Naive thymus-derived CD4-positive, alpha-beta T cell (primary cell): ENCODE measurements at regions of chr4 and their contacts with region 1.

Region 1: DNA sequence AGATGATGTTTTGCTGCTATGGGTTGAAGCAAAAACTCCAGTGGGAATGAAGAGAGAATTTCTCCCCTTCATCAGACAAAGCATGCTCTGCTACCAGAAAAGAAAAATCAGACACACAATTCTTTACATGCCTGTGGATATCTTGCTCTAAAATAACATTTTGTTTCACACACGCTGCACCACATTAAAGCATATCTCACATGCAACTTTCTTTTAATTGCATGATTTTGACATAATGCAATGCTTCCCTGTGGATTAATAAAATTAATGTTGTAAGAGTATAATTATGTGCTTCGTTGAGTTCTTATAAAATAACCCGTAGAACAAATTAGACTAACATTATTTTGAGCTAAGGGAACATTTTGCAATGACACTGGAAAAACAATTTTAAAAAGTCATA is 2230.7 kb downstream of the PCDH7 start:
- DNase-seq: no peak
- ATAC-seq: no peak
- H3K4me3 ChIP-seq: no peak overlapping the region
- H3K4me3 Mint-ChIP-seq: no peak overlapping the region
- H3K27ac ChIP-seq: no peak overlapping the region
- H3K27ac Mint-ChIP-seq: no peak overlapping the region
- H3K4me1 ChIP-seq: no peaks in the 10 kb centered on the region
- H3K4me1 Mint-ChIP-seq: no peaks in the 10 kb centered on the region
- H3K27me3 ChIP-seq: no peaks in the 10 kb centered on the region
- H3K27me3 Mint-ChIP-seq: no peaks in the 10 kb centered on the region

Region 2: GRCh38 chr4:32417113-32417704 is 533.7 kb before region 1 on chr4:
- CTCF ChIA-PET with region 1: no interaction called
- POLR2A ChIA-PET with region 1: no interaction called
- intact Hi-C with region 1: no loop called
- DNase-seq: no peak
- ATAC-seq: no peak
- H3K4me3 ChIP-seq: no peak overlapping the region
- H3K4me3 Mint-ChIP-seq: no peak overlapping the region
- H3K27ac ChIP-seq: no peak overlapping the region
- H3K27ac Mint-ChIP-seq: no peak overlapping the region
- H3K4me1 ChIP-seq: no peaks in the 10 kb centered on the region
- H3K4me1 Mint-ChIP-seq: no peaks in the 10 kb centered on the region
- H3K27me3 ChIP-seq: no peaks in the 10 kb centered on the region
- H3K27me3 Mint-ChIP-seq: no peaks in the 10 kb centered on the region

Region 3: GRCh38 chr4:32890398-32890797 is 60.5 kb before region 1 on chr4:
- CTCF ChIA-PET with region 1: no interaction called
- POLR2A ChIA-PET with region 1: no interaction called
- intact Hi-C with region 1: loop called in 1 of 2 experiments (anchors 10 kb)
- DNase-seq: no peak
- ATAC-seq: no peak
- H3K4me3 ChIP-seq: no peak overlapping the region
- H3K4me3 Mint-ChIP-seq: no peak overlapping the region
- H3K27ac ChIP-seq: no peak overlapping the region
- H3K27ac Mint-ChIP-seq: no peak overlapping the region
- H3K4me1 ChIP-seq: no peaks in the 10 kb centered on the region
- H3K4me1 Mint-ChIP-seq: no peaks in the 10 kb centered on the region
- H3K27me3 ChIP-seq: no peaks in the 10 kb centered on the region
- H3K27me3 Mint-ChIP-seq: no peaks in the 10 kb centered on the region

Region 4: GRCh38 chr4:32917586-32917985 is 33.3 kb before region 1 on chr4:
- CTCF ChIA-PET with region 1: no interaction called
- POLR2A ChIA-PET with region 1: no interaction called
- intact Hi-C with region 1: no loop called
- DNase-seq: no peak
- ATAC-seq: no peak
- H3K4me3 ChIP-seq: no peak overlapping the region
- H3K4me3 Mint-ChIP-seq: no peak overlapping the region
- H3K27ac ChIP-seq: no peak overlapping the region
- H3K27ac Mint-ChIP-seq: no peak overlapping the region
- H3K4me1 ChIP-seq: no peaks in the 10 kb centered on the region
- H3K4me1 Mint-ChIP-seq: no peaks in the 10 kb centered on the region
- H3K27me3 ChIP-seq: no peaks in the 10 kb centered on the region
- H3K27me3 Mint-ChIP-seq: no peaks in the 10 kb centered on the region

Region 5: DNA sequence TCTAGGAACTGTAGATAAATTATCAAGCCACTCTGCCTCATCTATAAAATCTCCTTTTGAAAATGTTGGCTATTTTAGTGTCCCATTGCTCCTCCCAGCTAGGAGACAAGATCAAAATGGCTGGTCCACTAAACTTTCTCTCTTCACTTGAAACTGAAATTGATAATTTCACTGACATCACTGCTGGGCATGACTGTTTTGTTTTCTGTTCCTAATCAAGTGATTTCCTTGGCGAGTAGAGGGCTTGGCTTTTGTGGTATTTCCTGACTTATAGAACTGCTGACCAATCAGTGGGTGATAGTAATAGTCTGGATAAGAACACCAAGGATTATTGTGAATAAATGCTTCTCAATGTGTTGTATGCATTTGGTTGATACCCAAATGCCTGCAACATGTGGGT is 1140.6 kb after region 1 on chr4:
- CTCF ChIA-PET with region 1: no interaction called
- POLR2A ChIA-PET with region 1: no interaction called
- intact Hi-C with region 1: no loop called
- DNase-seq: no peak
- ATAC-seq: no peak
- H3K4me3 ChIP-seq: no peak overlapping the region
- H3K4me3 Mint-ChIP-seq: no peak overlapping the region
- H3K27ac ChIP-seq: no peak overlapping the region
- H3K27ac Mint-ChIP-seq: no peak overlapping the region
- H3K4me1 ChIP-seq: no peaks in the 10 kb centered on the region
- H3K4me1 Mint-ChIP-seq: no peaks in the 10 kb centered on the region
- H3K27me3 ChIP-seq: no peaks in the 10 kb centered on the region
- H3K27me3 Mint-ChIP-seq: no peaks in the 10 kb centered on the region